Right ventricle myocardium inferior (tissue), 1 donor: ENCODE measurements at regions of chr2 and their contacts with region 1.

Region 1: DNA sequence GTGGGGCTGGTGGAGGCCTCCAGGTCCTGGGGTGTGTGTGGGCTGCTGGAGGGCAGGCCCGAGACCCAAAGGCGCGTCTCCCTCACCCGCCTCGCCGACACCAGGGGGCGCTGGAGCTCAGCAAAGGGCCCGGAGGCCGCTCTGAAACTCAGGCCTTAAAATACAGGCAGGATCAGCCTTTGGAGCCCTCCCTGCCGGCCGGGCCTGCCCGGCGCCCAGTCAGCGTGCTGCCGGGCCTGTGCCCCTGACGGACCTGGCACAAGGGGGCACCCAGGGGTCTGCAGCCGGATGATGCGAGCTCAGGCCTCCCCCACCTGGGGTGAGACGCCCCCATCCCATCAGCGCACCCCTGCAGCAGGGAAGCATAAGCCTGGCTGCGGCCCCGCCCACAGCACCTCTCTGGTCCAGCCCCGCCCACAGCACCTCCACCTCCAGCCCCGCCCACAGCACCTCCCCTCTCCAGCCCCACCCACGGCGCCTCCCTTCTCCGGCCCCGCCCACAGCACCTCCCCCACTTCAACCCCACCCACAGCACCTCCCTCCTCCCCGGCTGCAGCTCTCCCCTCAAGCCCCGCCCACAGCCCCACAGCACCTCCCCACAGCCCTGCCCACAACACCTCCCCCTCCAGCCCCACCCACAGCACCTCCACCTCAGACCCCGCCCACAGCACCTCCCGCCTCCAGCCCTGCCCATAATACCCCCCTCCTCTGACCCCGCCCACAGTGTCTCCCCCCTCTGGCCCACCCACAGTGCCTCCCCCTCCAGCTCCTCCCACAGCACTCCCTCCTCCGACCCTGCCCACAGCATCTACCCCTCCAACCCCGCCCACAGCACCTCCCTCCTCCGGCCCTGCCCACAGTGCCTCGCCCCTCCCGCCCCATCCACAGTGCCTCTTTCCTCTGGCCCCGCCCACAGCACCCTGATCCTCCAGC is 92.8 kb upstream of the OTOS start:
- DNase-seq: peak; percentile 89
- ATAC-seq: peak; percentile 81

Region 2: DNA sequence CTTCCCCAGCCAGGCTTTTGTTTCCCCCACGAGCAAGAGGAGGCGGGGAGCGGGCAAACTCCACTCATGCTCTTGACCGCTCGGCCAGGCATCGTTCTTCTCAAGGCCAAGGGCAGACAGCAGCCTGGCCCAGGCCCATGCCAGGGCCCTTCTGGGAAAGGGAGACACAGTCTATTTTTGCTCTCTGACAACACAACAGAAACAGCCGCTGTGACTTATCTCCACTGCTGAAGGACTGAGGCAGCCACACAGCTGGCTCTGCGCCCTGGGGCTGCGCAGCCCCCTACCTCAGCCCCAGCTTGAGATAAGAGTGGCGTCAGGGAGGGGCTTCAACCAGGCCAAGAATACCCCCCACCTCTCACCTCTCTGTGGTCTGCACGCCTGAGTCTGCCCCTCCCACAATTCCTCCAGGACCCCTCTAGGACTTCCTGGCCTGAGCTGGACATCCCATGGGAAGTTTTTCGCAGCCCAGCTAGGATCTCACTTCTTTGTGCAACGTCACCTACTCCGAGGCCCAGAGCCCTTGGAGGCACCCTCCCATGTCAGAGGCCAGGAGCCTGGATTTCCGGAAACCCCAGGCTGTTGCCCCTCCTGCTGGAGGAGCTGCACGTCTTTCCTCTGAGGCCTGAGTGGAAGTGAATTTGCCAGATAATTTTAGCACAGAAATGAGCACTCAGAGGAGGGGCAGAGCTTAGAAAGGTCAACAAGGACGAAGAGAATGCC is 26.1 kb after region 1 on chr2:
- intact Hi-C with region 1: loop called (anchors 2 kb)
- DNase-seq: no peak
- ATAC-seq: peak; percentile 91

Region 3: GRCh38 chr2:240343176-240343947 is 110.1 kb after region 1 on chr2:
- intact Hi-C with region 1: loop called (anchors 2 kb)
- DNase-seq: no peak
- ATAC-seq: no peak

Region 4: GRCh38 chr2:240434728-240435456 is 201.7 kb after region 1 on chr2:
- intact Hi-C with region 1: loop called (anchors 1 kb)
- DNase-seq: peak; percentile 94
- ATAC-seq: peak; percentile 83